ENCODE measurements at regions of chr1 and their contacts with region 1.

Region 1: DNA sequence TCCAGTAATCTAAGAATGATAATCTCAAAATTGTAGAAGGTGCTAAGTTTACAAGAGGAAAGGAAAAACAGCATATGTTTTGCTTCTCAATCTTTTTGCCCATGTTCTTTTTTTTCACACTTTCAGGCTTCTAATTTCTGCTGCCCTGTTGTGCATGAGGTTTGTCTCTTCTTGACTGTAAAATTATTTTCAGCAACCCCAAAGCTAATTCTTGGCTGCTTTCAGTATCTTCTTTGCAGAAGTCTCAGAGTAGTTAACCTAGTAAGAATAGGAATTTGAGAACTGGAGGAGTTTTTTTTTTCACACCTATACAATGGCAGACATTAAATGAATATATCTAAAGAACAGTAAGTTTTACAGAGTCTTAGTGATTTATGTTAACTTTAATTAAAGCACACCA is 26.4 kb downstream of the DENND2D start:
- DNase-seq: no peak
- ATAC-seq: peak; percentile 54
- H3K4me3 ChIP-seq: no peak overlapping the region
- H3K27ac ChIP-seq: no peak overlapping the region
- H3K4me1 ChIP-seq: peaks cover 14% of the 10 kb centered on the region
- H3K27me3 ChIP-seq: no peaks in the 10 kb centered on the region
- CTCF ChIP-seq: no peak
- EP300 ChIP-seq: no peak
- POLR2A ChIP-seq: no peak
- RAD21 ChIP-seq: no peak

Region 2: DNA sequence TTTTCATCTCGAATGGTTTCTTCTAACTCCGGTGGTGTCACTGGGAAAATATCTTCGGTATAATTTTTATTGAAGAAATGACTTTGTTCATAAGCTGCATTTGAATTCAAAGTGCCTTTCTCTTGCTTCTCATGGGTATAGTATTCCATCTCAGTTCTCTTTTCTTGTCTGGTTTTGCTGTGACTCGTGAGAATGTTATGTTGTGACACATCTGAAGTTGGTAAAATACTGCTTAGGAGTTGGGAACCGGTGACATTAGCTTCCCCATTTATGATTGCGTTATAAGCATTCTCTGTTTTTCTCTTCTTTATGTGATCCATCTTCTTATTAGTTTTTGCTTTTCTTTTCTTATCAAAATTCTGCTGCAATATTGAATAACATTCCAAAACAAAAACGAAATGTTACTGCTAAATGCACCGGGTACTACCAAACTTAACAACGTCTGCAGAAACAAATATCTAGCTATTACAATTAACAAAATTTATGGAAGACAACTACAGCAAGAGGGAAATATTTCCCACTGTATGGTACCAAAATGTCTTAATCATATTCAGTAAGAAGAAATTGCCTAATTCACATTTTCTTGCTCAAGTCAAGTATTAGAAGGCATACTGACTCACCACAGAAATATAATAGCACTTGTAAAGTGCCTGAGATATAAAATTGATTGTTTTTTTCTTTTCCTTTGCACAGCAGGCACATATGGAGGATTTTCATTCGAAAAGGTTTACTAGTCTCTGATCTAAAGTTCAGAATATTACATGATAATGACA is 225.8 kb before region 1 on chr1:
- CTCF ChIA-PET with region 1: no interaction called
- POLR2A ChIA-PET with region 1: no interaction called
- RAD21 ChIA-PET with region 1: no interaction called
- SMC1A ChIA-PET with region 1: no interaction called
- in situ Hi-C with region 1: no loop called
- intact Hi-C with region 1: no loop called
- DNase-seq: no peak
- ATAC-seq: no peak
- H3K4me3 ChIP-seq: no peak overlapping the region
- H3K27ac ChIP-seq: no peak overlapping the region
- H3K4me1 ChIP-seq: no peaks in the 10 kb centered on the region
- H3K27me3 ChIP-seq: no peaks in the 10 kb centered on the region
- CTCF ChIP-seq: no peak
- EP300 ChIP-seq: no peak
- POLR2A ChIP-seq: no peak
- RAD21 ChIP-seq: no peak

Region 3: DNA sequence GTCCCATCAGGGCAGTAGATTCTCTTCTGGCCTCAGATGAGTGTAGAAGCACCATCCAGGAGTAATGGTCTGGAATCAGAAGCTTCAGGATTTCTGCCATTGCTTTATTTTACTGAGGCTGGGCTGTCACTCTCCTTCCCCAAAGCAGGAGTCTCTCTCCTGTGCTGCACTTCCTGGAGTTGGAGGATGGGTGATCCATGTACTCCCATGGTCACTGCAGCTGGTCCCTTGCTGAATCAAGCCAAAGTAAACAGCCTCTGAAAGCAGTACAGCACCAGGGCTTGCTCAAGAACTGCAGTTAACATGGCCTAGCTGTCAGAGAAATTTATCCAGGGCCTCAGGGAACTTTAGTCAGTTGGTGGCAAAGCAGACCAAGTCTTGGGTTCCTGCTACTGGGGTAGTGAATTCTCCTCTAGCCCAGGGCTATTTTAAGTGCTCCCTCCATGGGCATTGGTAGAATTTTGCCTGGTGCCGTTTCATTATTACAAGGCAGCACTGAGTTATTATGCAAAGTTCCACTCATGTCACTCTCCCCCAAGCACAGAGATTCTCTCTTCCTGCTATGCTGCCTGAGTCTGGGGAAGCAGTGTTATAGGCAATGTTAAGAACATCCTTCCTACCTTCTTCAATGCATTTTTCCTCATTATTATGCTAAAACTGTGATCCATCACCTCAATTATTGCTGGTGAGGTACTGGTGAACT is 63.7 kb before region 1 on chr1:
- CTCF ChIA-PET with region 1: no interaction called
- POLR2A ChIA-PET with region 1: no interaction called
- RAD21 ChIA-PET with region 1: no interaction called
- SMC1A ChIA-PET with region 1: no interaction called
- in situ Hi-C with region 1: no loop called
- intact Hi-C with region 1: no loop called
- DNase-seq: no peak
- ATAC-seq: no peak
- H3K4me3 ChIP-seq: no peak overlapping the region
- H3K27ac ChIP-seq: no peak overlapping the region; the same call in 1 of the 2 replicates
- H3K4me1 ChIP-seq: no peaks in the 10 kb centered on the region
- H3K27me3 ChIP-seq: no peaks in the 10 kb centered on the region
- CTCF ChIP-seq: no peak
- EP300 ChIP-seq: no peak
- POLR2A ChIP-seq: no peak
- RAD21 ChIP-seq: no peak

Region 4: DNA sequence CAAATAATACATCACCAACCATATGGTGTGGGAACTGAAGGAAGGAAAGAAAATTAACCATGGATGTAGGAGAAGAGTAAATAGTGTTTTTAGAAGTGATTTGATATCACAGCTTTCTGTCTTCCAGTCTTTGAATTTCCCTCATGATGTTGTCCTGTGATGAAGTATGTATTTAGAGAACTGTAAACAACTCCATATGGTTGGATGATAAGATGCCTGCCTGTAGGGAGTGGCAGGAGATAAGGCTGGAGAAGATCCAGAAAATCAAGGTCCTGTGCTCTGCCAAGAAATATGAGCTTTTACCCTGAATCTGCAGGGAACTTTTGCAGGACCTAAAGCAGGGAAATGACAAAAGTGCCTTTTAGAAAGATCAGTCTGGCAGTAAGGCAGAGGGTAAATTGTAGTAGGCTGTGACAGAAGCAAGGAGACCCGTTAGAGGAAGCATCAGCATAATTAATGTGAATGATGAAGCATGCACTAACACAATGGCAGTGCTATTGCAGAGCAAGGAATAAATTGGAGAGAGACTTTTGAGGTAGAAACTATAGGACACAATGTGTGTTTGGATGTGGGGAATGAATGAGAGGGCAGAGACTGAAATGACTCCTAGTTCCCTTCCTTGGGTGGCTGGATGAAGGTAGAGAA is 12.1 kb before region 1 on chr1:
- CTCF ChIA-PET with region 1: no interaction called
- POLR2A ChIA-PET with region 1: no interaction called
- RAD21 ChIA-PET with region 1: interaction called, 3 read pairs
- SMC1A ChIA-PET with region 1: interaction called, 14 read pairs
- in situ Hi-C with region 1: no loop called
- intact Hi-C with region 1: no loop called
- DNase-seq: no peak
- ATAC-seq: no peak; the same call in 2 of the 3 replicates
- H3K4me3 ChIP-seq: no peak overlapping the region
- H3K27ac ChIP-seq: no peak overlapping the region
- H3K4me1 ChIP-seq: no peaks in the 10 kb centered on the region
- H3K27me3 ChIP-seq: no peaks in the 10 kb centered on the region
- CTCF ChIP-seq: no peak
- EP300 ChIP-seq: no peak
- POLR2A ChIP-seq: no peak
- RAD21 ChIP-seq: no peak

Measured in GM12878 (cell line).